IMR-90 (cell line): ENCODE measurements at regions of chr2 and their contacts with region 1.

Region 1: GRCh38 chr2:229273723-229274338 is 2.7 kb upstream of the PID1 start:
- DNase-seq: peak; percentile 67
- ATAC-seq: peak; percentile 86
- H3K4me3 ChIP-seq: no peak overlapping the region; the same call in 1 of the 2 replicates
- H3K27ac ChIP-seq: no peak overlapping the region
- H3K4me1 ChIP-seq: no peaks in the 10 kb centered on the region
- H3K27me3 ChIP-seq: no peaks in the 10 kb centered on the region
- CTCF ChIP-seq: peak; percentile 58
- POLR2A ChIP-seq: no peak
- RAD21 ChIP-seq: peak; percentile 57

Region 2: DNA sequence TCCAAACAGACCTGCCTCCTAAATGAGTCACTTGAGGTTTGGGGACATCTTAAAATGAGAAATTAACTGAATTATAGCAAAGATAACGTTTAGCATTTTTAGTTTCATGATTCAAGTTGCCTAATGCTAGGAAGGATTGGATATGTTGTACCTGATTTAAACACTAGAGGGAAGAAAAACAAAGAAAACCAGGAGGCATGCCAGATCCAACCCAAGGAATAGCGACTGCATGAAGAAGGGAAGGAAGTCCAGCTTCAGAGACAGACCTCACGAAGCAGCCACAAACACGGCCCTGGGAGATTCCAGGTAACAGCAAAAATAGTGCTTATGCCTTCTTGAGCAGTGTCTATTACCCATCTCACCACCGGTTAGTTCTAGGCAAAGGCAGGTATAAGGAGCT is 592.4 kb before region 1 on chr2:
- CTCF ChIA-PET with region 1: no interaction called
- POLR2A ChIA-PET with region 1: no interaction called
- dilution Hi-C with region 1: no loop called
- in situ Hi-C with region 1: loop called (anchors 10 kb)
- intact Hi-C with region 1: loop called (anchors 5 kb)
- DNase-seq: peak; percentile 49
- ATAC-seq: peak; percentile 59
- H3K4me3 ChIP-seq: no peak overlapping the region
- H3K27ac ChIP-seq: no peak overlapping the region
- H3K4me1 ChIP-seq: peaks cover 2% of the 10 kb centered on the region; the same call in 1 of the 2 replicates
- H3K27me3 ChIP-seq: no peaks in the 10 kb centered on the region
- CTCF ChIP-seq: peak; percentile 33
- POLR2A ChIP-seq: no peak
- RAD21 ChIP-seq: peak; percentile 25

Region 3: GRCh38 chr2:229133155-229133772 is 140.6 kb before region 1 on chr2:
- CTCF ChIA-PET with region 1: no interaction called
- POLR2A ChIA-PET with region 1: no interaction called
- dilution Hi-C with region 1: no loop called
- in situ Hi-C with region 1: no loop called
- intact Hi-C with region 1: loop called (anchors 1 kb)
- DNase-seq: peak; percentile 12
- ATAC-seq: no peak
- H3K4me3 ChIP-seq: no peak overlapping the region
- H3K27ac ChIP-seq: no peak overlapping the region
- H3K4me1 ChIP-seq: no peaks in the 10 kb centered on the region
- H3K27me3 ChIP-seq: no peaks in the 10 kb centered on the region
- CTCF ChIP-seq: peak; percentile 17; the same call in 1 of the 2 replicates
- POLR2A ChIP-seq: no peak
- RAD21 ChIP-seq: peak; percentile 26